Mammary epithelial cell (primary cell): ENCODE measurements at regions of chr9 and their contacts with region 1.

Region 1: GRCh38 chr9:95875305-95876137 is at the start of gene ERCC6L2:
- DNase-seq: peak; percentile 97
- H3K4me3 ChIP-seq: no peak within 1 kb of the TSS
- H3K27ac ChIP-seq: no peak within 1 kb of the TSS
- H3K4me1 ChIP-seq: peaks cover 4% of the 10 kb centered on the region
- H3K27me3 ChIP-seq: no peaks in the 10 kb centered on the region
- CTCF ChIP-seq: no peak
- total RNA-seq, gene ERCC6L2: 28.9 to 73.5 TPM

Region 2: DNA sequence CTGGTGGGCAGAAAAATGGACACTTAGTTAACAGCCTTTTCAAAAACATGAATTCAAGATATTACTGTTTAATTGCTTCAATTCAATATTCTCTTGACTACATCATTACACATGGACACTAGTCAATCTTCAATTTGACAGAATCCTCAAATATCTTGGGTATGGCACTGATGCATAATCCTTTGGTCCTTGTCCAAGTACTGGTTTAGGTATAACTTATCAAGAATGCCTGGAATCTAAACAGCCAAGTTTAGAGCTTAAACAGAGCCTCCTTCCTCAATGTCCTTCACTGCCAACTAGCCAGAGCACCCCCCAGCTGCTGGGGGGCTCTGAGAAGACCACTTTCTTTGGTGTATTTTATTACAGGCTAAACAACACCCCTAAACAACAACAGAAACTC is 61.6 kb before region 1 on chr9:
- CTCF ChIA-PET with region 1: no interaction called
- dilution Hi-C with region 1: loop called (anchors 5 kb)
- in situ Hi-C with region 1: no loop called
- intact Hi-C with region 1: no loop called
- DNase-seq: no peak
- H3K4me3 ChIP-seq: no peak overlapping the region
- H3K27ac ChIP-seq: no peak overlapping the region
- H3K4me1 ChIP-seq: no peaks in the 10 kb centered on the region
- H3K27me3 ChIP-seq: no peaks in the 10 kb centered on the region
- CTCF ChIP-seq: no peak

Region 3: GRCh38 chr9:95901506-95901905 is 26.0 kb after region 1 on chr9:
- CTCF ChIA-PET with region 1: no interaction called
- dilution Hi-C with region 1: no loop called
- in situ Hi-C with region 1: no loop called
- intact Hi-C with region 1: loop called (anchors 2 kb)
- DNase-seq: peak; percentile 28
- H3K4me3 ChIP-seq: no peak overlapping the region
- H3K27ac ChIP-seq: no peak overlapping the region
- H3K4me1 ChIP-seq: peaks cover 9% of the 10 kb centered on the region
- H3K27me3 ChIP-seq: no peaks in the 10 kb centered on the region
- CTCF ChIP-seq: no peak

Region 4: DNA sequence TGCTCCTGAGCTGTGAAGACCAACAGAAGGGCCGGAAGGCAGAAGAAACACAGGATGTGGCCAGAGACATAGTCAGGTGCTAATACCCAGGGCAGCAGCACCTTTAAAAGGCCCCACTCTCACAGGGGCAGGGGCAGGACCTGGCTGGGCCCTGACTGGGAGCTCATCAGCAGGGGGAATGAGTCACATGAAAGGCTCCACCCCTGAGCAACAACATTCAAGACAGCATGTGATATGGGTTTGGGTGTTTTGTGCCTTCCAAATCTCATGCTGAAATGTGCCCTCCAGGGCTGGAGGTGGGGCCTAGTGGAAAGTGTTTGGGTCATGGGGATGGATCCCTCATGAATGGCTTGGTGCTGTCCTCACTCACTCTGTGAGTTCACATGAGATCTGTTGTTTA is 181.6 kb after region 1 on chr9:
- CTCF ChIA-PET with region 1: no interaction called
- dilution Hi-C with region 1: no loop called
- in situ Hi-C with region 1: no loop called
- intact Hi-C with region 1: no loop called
- DNase-seq: peak; percentile 16
- H3K4me3 ChIP-seq: no peak overlapping the region
- H3K27ac ChIP-seq: no peak overlapping the region
- H3K4me1 ChIP-seq: peaks cover 5% of the 10 kb centered on the region
- H3K27me3 ChIP-seq: no peaks in the 10 kb centered on the region
- CTCF ChIP-seq: no peak

Region 5: GRCh38 chr9:96071076-96071814 is 195.7 kb after region 1 on chr9:
- CTCF ChIA-PET with region 1: no interaction called
- dilution Hi-C with region 1: no loop called
- in situ Hi-C with region 1: no loop called
- intact Hi-C with region 1: no loop called
- DNase-seq: peak; percentile 17
- H3K4me3 ChIP-seq: no peak overlapping the region
- H3K27ac ChIP-seq: no peak overlapping the region
- H3K4me1 ChIP-seq: no peaks in the 10 kb centered on the region
- H3K27me3 ChIP-seq: peaks cover 6% of the 10 kb centered on the region
- CTCF ChIP-seq: peak; percentile 51 to 59